Activated CD8-positive, alpha-beta T cell treated with anti-CD3 and anti-CD28 coated beads, Interleukin-2, amount 10 ng/mL, durations not matched to agents 7 days and 5 days (primary cell): ENCODE measurements at regions of chr15 and their contacts with region 1.

Region 1: DNA sequence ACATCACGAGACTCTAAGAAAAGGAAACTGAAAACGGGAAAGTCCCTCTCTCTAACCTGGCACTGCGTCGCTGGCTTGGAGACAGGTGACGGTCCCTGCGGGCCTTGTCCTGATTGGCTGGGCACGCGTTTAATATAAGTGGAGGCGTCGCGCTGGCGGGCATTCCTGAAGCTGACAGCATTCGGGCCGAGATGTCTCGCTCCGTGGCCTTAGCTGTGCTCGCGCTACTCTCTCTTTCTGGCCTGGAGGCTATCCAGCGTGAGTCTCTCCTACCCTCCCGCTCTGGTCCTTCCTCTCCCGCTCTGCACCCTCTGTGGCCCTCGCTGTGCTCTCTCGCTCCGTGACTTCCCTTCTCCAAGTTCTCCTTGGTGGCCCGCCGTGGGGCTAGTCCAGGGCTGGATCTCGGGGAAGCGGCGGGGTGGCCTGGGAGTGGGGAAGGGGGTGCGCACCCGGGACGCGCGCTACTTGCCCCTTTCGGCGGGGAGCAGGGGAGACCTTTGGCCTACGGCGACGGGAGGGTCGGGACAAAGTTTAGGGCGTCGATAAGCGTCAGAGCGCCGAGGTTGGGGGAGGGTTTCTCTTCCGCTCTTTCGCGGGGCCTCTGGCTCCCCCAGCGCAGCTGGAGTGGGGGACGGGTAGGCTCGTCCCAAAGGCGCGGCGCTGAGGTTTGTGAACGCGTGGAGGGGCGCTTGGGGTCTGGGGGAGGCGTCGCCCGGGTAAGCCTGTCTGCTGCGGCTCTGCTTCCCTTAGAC is at the start of gene B2M:
- DNase-seq: peak; percentile 97
- ATAC-seq: peak; percentile 73
- H3K4me3 Mint-ChIP-seq: peak within 1 kb of the TSS; percentile 99
- H3K27ac Mint-ChIP-seq: peak within 1 kb of the TSS; percentile 96
- H3K4me1 Mint-ChIP-seq: peaks cover 39% of the 10 kb centered on the region
- H3K27me3 Mint-ChIP-seq: no peaks in the 10 kb centered on the region
- total RNA-seq, gene B2M: 6,300 to 6,473 TPM

Region 2: GRCh38 chr15:44584162-44584749 is 127.3 kb before region 1 on chr15:
- CTCF ChIA-PET with region 1: interaction called, 4 read pairs
- POLR2A ChIA-PET with region 1: interaction called, 10 read pairs
- DNase-seq: peak; percentile 64
- ATAC-seq: peak; percentile 79
- H3K4me3 Mint-ChIP-seq: no peak overlapping the region
- H3K27ac Mint-ChIP-seq: no peak overlapping the region
- H3K4me1 Mint-ChIP-seq: peaks cover 2% of the 10 kb centered on the region
- H3K27me3 Mint-ChIP-seq: no peaks in the 10 kb centered on the region

Region 3: DNA sequence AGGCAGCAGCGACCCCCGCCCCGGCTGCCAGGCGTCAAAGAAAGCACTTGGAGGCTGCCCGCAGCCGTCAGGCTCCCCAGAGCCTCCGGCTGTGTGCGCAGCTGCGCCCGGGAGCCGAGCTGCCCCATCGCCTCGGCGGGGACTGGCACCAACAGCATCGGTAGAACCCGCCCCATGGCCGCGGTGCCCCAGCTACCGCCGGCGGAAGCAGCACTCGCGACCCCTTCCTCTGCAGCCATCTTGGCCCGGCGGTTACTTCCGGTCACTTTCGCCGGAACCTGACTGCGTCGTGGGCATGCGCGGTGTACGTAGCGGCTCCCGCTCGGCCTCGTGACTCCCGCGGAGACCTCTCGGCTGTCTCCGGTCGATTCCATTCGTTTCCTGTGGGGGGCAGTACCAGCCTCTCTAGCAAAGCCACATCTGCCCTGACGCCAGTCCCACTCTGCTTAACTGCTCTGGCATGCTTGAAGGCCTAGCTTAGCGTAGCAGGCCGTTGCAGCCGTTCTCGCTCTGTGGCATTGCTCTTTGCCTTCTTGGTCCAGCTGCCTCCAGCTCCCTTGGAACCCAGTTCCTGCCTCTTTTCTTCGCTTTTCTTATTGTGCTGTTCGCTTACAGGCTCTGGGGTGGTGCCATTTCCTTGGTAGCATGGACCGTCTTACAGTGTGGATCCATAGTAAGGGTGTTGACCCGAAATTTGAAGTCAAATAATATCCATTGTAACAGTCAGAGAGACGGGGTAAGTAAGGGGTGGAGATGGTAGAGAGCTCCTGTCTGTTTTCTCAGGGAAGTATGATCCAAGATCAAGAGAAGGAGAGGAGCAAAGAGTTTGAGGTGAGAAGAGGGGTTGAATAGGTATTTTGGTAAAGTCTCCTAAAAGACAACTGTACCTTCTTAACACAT is 47.9 kb before region 1 on chr15 and contains the start of gene SPG11:
- CTCF ChIA-PET with region 1: interaction called, 476 read pairs
- POLR2A ChIA-PET with region 1: interaction called, 1,989 read pairs
- DNase-seq: peak; percentile 99
- ATAC-seq: peak; percentile 83
- H3K4me3 Mint-ChIP-seq: peak within 1 kb of the TSS; percentile 98
- H3K27ac Mint-ChIP-seq: peak within 1 kb of the TSS; percentile 95
- H3K4me1 Mint-ChIP-seq: peaks cover 50% of the 10 kb centered on the region
- H3K27me3 Mint-ChIP-seq: no peaks in the 10 kb centered on the region
- total RNA-seq, gene SPG11: 73.8 to 75.8 TPM

Region 4: DNA sequence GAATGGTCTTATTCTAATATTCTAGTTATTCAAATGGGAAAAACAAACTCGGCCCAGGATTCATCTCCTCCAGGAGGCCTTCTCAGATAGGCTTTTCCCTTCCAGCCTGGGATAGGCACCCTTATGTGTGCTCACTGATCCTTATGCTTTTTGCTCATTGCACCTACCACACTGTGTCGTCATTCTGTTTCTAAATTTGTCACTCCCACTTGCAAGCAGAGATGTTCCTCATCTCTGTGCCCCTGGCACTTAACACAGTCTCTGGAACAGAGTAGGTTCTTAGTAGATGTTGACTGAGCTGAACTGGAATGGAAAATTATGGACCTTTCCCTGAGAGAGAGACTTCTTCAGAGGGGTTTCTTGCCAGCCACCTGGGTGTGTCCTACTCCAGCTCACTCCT is 29.3 kb before region 1 on chr15:
- CTCF ChIA-PET with region 1: interaction called, 37 read pairs
- POLR2A ChIA-PET with region 1: interaction called, 1,989 read pairs
- DNase-seq: no peak
- ATAC-seq: no peak
- H3K4me3 Mint-ChIP-seq: peak overlapping the region; percentile 66
- H3K27ac Mint-ChIP-seq: peak overlapping the region; percentile 88
- H3K4me1 Mint-ChIP-seq: peaks cover 89% of the 10 kb centered on the region
- H3K27me3 Mint-ChIP-seq: no peaks in the 10 kb centered on the region

Region 5: DNA sequence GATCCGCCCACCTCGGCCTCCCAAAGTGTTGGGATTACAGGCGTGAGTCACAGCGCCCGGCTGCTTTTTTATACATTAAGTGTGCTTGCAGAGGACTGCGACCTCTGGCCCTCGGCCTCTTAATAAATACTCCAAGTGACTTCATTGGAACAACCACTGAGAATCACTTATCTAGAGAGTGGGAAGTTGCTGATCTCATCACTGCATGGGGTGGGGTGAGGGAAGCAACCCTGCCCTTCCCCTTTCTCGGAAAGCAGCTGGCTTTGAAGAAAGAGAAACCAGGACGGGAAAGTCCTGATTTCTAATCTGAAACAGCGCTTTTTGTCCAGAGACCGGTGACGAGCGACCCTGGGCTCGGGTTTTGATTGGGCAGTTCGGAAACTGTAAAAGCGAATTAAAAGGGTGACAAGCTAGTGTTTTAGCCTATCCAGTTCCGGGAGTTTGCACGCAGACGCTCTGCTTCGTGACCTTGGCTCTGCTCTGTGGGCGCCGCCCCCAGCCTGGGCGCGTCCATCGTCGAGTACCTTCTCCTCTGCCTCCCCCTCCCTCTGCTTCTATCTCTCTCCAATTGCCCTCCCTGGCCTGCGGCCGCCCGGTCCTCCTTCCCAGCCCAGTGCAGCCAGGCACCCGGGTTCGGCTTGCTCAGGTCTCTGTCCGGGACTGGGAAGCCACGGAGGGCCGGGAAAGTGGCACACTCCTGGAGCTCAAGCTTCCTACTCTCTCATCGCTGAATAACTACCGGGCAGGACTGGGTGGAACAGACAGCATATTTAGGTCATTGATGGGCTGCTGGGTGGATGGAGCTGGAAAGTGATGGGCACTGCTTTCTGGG is 17.3 kb after region 1 on chr15:
- CTCF ChIA-PET with region 1: interaction called, 189 read pairs
- POLR2A ChIA-PET with region 1: interaction called, 2,005 read pairs
- DNase-seq: peak; percentile 98
- ATAC-seq: peak; percentile 82
- H3K4me3 Mint-ChIP-seq: peak overlapping the region; percentile 99
- H3K27ac Mint-ChIP-seq: peak overlapping the region; percentile 100
- H3K4me1 Mint-ChIP-seq: peaks cover 72% of the 10 kb centered on the region
- H3K27me3 Mint-ChIP-seq: no peaks in the 10 kb centered on the region